ENCODE measurements at regions of chr6 and their contacts with region 1.

Region 1: DNA sequence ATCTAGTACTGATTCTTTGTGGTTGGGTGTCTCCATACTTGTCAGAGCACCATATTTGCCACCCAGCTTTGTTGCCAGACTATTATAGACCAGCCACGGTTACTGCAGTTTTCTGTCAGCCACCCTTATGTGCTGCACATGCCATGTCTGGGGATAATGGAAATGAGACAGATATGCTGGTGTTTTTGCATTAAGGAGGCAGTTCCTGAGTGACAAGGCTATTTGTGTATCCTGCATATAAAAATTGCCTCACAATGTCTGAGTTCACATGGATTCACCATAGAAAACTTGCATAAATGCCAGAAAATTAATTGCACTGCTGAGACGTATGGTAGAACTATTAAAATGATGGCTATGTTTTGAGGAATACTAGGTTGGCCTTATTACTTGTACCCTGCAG is 51.8 kb downstream of the NKAIN2 start:
- DNase-seq: no peak
- ATAC-seq: no peak
- H3K4me3 ChIP-seq: no peak overlapping the region
- H3K27ac ChIP-seq: no peak overlapping the region
- H3K4me1 ChIP-seq: no peaks in the 10 kb centered on the region
- H3K27me3 ChIP-seq: peaks cover 3% of the 10 kb centered on the region; the same call in 1 of the 2 replicates
- CTCF ChIP-seq: no peak
- POLR2A ChIP-seq: no peak
- RAD21 ChIP-seq: no peak

Region 2: DNA sequence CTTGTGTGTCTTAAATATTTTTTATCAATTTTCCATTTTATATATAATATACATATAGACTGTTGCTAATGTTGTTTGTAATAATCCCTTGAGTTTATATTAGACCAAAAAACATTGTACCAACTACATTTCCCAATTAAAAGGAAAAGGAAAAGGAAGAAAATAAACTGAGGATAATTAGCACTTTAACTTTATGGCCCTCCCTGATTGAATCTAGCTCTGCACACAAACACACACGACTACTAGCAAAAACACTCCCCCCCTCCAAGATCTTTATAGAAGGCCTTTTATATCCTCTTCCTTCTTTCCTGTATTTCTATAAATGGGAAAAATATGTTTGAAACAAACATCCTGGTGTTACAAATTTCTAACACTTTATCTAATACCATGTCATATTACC is 225.0 kb after region 1 on chr6:
- CTCF ChIA-PET with region 1: no interaction called
- POLR2A ChIA-PET with region 1: no interaction called
- RAD21 ChIA-PET with region 1: no interaction called
- intact Hi-C with region 1: loop called (anchors 1 kb)
- DNase-seq: no peak
- ATAC-seq: no peak
- H3K4me3 ChIP-seq: no peak overlapping the region
- H3K27ac ChIP-seq: no peak overlapping the region
- H3K4me1 ChIP-seq: no peaks in the 10 kb centered on the region
- H3K27me3 ChIP-seq: peaks cover 20% of the 10 kb centered on the region; the same call in 1 of the 2 replicates
- CTCF ChIP-seq: no peak
- POLR2A ChIP-seq: no peak
- RAD21 ChIP-seq: no peak

Region 3: GRCh38 chr6:124319410-124319809 is 463.9 kb after region 1 on chr6:
- CTCF ChIA-PET with region 1: no interaction called
- POLR2A ChIA-PET with region 1: no interaction called
- RAD21 ChIA-PET with region 1: no interaction called
- intact Hi-C with region 1: no loop called
- DNase-seq: no peak
- ATAC-seq: no peak
- H3K4me3 ChIP-seq: no peak overlapping the region
- H3K27ac ChIP-seq: no peak overlapping the region
- H3K4me1 ChIP-seq: no peaks in the 10 kb centered on the region
- H3K27me3 ChIP-seq: no peaks in the 10 kb centered on the region; the same call in 1 of the 2 replicates
- CTCF ChIP-seq: no peak
- POLR2A ChIP-seq: no peak
- RAD21 ChIP-seq: no peak